ENCODE measurements at regions of chr1 and their contacts with region 1.

Region 1: GRCh38 chr1:231866392-231867331 is 240.1 kb downstream of the DISC1 start:
- DNase-seq: peak; percentile 44 to 58 (median 51)
- H3K4me3 ChIP-seq: no peak overlapping the region
- H3K4me3 Mint-ChIP-seq: peak overlapping the region in 4 of 8 donors; percentile 54 to 71 (median 64)
- H3K27ac ChIP-seq: no peak overlapping the region
- H3K27ac Mint-ChIP-seq: peak overlapping the region in 3 of 7 donors; percentile 58 to 77 (median 65)
- H3K4me1 ChIP-seq: peaks cover 27% of the 10 kb centered on the region
- H3K4me1 Mint-ChIP-seq: peaks cover 24 to 50% (median 40%) of the 10 kb centered on the region in 4 donors
- H3K27me3 ChIP-seq: no peaks in the 10 kb centered on the region
- H3K27me3 Mint-ChIP-seq: no peaks in the 10 kb centered on the region

Region 2: GRCh38 chr1:231806623-231807495 is 59.8 kb before region 1 on chr1:
- CTCF ChIA-PET with region 1: no interaction called
- POLR2A ChIA-PET with region 1: no interaction called
- intact Hi-C with region 1: no loop called
- DNase-seq: peak in 2 of 5 donors; percentile 3 to 6
- H3K4me3 ChIP-seq: no peak overlapping the region
- H3K4me3 Mint-ChIP-seq: no peak overlapping the region
- H3K27ac ChIP-seq: no peak overlapping the region
- H3K27ac Mint-ChIP-seq: no peak overlapping the region
- H3K4me1 ChIP-seq: no peaks in the 10 kb centered on the region
- H3K4me1 Mint-ChIP-seq: peaks cover 0 to 5% (median 0%) of the 10 kb centered on the region in 4 donors
- H3K27me3 ChIP-seq: no peaks in the 10 kb centered on the region
- H3K27me3 Mint-ChIP-seq: no peaks in the 10 kb centered on the region

Region 3: DNA sequence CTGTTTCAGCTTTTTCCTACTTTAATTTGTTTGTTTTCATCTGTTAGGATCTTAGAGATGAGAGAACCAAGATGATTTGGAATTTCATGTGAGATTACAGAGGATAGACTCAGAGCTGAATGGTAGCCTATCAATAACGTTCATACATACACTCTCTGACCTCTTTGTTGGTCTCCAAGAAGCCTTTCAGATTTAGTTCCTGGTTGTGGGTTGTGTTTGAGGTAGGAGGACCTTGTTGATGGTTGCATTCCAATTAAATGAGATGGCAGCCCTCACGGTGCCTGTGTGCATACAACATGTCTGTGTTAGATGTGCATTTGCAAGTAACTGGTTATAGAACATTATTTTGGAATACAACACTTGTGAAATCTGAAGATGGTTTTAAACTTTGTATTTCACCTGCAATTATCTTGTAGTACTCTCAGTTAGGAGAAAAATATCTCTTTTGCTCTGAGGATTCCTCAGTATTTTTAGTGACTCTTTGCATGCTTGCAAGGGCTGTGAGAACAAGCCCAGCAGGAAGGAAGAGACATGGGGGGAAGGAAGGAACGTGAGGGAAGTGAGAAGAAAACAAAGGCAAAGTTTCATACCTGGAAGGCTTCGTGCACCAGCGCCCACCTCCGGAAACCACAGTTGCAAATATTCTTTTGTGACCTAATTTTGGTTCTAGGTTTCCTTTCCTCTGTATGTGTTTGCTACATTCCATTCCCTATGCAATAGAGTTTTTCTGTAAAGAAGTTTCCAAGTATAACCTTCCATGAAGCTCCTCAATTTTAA is 51.8 kb after region 1 on chr1:
- CTCF ChIA-PET with region 1: interaction called, 24 read pairs
- POLR2A ChIA-PET with region 1: no interaction called
- intact Hi-C with region 1: loop called (anchors 2 kb)
- DNase-seq: peak; percentile 35 to 59 (median 48)
- H3K4me3 ChIP-seq: peak overlapping the region in 1 of 2 donors; percentile 31
- H3K4me3 Mint-ChIP-seq: peak overlapping the region; percentile 69 to 89 (median 86)
- H3K27ac ChIP-seq: peak overlapping the region; percentile 53
- H3K27ac Mint-ChIP-seq: peak overlapping the region; percentile 49 to 96 (median 92)
- H3K4me1 ChIP-seq: peaks cover 66% of the 10 kb centered on the region
- H3K4me1 Mint-ChIP-seq: peaks cover 59 to 84% (median 75%) of the 10 kb centered on the region in 4 donors
- H3K27me3 ChIP-seq: no peaks in the 10 kb centered on the region
- H3K27me3 Mint-ChIP-seq: no peaks in the 10 kb centered on the region

Region 4: GRCh38 chr1:231931846-231932454 is 65.3 kb after region 1 on chr1:
- CTCF ChIA-PET with region 1: interaction called, 70 read pairs
- POLR2A ChIA-PET with region 1: no interaction called
- intact Hi-C with region 1: loop called (anchors 1 kb)
- DNase-seq: peak in 2 of 5 donors; percentile 6 to 9
- H3K4me3 ChIP-seq: no peak overlapping the region
- H3K4me3 Mint-ChIP-seq: no peak overlapping the region
- H3K27ac ChIP-seq: no peak overlapping the region
- H3K27ac Mint-ChIP-seq: no peak overlapping the region
- H3K4me1 ChIP-seq: peaks cover 14% of the 10 kb centered on the region
- H3K4me1 Mint-ChIP-seq: peaks cover 18 to 39% (median 28%) of the 10 kb centered on the region in 4 donors
- H3K27me3 ChIP-seq: no peaks in the 10 kb centered on the region
- H3K27me3 Mint-ChIP-seq: no peaks in the 10 kb centered on the region

Region 5: DNA sequence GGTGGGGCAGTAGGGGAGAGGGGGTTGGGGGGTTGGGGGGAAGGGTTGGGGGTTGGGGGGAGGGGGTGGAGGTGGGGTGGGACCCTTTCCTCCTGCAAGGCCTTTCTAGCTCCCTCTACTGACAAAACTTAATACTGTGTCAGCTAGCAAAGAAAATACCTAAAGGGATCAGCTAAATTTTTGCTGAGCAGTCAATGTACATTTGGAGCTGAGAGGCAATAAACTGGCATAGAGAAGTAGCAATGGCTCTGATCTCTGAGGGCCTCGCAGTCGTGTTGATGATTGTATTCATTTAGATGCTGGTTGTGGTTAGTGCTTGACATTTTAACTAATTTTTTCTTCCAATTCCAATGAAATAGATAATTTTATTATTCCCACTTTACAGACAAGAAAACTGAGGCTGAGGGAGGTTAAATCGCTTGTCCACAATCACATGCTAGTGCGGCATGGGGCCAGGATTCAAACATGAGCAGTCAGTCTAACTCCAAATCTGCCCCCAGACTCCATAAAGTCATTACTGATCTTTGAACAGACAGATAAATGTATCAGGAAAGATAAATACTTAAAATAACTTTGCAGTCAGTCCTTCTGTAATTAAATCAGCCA is 117.0 kb after region 1 on chr1:
- CTCF ChIA-PET with region 1: interaction called, 13 read pairs
- POLR2A ChIA-PET with region 1: no interaction called
- intact Hi-C with region 1: loop called (anchors 5 kb)
- DNase-seq: no peak
- H3K4me3 ChIP-seq: no peak overlapping the region
- H3K4me3 Mint-ChIP-seq: no peak overlapping the region
- H3K27ac ChIP-seq: no peak overlapping the region
- H3K27ac Mint-ChIP-seq: no peak overlapping the region
- H3K4me1 ChIP-seq: no peaks in the 10 kb centered on the region
- H3K4me1 Mint-ChIP-seq: peaks cover 8 to 11% (median 8%) of the 10 kb centered on the region in 4 donors
- H3K27me3 ChIP-seq: no peaks in the 10 kb centered on the region
- H3K27me3 Mint-ChIP-seq: no peaks in the 10 kb centered on the region

Region 6: GRCh38 chr1:232999956-233000625 is 1133.4 kb after region 1 on chr1:
- CTCF ChIA-PET with region 1: no interaction called
- POLR2A ChIA-PET with region 1: no interaction called
- intact Hi-C with region 1: no loop called
- DNase-seq: no peak
- H3K4me3 ChIP-seq: no peak overlapping the region
- H3K4me3 Mint-ChIP-seq: no peak overlapping the region
- H3K27ac ChIP-seq: no peak overlapping the region
- H3K27ac Mint-ChIP-seq: no peak overlapping the region
- H3K4me1 ChIP-seq: no peaks in the 10 kb centered on the region
- H3K4me1 Mint-ChIP-seq: no peaks in the 10 kb centered on the region
- H3K27me3 ChIP-seq: no peaks in the 10 kb centered on the region
- H3K27me3 Mint-ChIP-seq: no peaks in the 10 kb centered on the region